ENCODE measurements at regions of chr7 and their contacts with region 1.

Region 1: DNA sequence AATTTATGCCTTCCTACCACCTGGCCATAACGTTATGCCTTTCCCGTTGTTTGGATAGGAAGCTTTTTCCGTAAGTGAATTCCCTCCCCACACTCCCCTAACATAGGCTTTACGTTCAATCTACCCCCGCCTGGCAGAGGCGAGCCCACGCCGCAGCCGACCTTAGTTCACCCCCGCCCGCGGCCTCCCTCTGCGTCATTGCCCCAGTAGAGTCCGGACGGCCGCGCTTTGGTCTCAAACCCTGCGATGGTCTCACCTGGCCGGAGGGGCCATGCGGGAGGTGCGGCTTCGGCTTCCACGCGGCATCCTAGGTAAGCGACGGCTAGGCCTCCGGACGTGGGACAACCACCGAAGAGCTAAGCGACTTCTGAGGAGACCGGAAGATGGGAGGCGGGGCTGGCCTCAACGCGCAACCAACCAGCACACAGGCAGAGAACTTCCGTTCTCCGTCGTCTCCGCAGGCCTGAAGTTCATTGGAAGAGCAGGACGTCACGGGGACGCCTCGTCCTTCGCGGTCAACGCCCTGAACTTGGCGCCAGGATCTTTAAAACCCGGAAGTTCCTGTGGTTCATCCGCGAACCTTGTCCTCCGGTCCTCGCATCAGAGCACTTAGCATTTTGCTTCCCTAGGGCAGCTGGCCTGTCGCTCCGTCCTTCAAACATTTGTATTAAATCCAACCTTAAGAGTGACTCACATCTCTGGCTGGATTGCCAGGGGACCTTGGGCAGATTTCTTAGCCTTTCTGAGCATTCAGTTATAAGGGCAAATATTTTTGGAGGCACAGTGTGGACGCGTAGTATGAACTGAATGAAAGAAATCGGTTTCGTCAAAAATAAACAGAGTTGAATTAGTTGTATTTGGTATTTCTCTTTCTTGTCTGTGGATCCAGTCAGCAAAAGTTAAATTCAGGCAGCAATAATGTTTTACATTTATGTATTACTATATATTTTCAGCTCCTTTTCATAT is at the start of gene CHCHD2:
- DNase-seq: peak; percentile 97
- ATAC-seq: peak; percentile 99
- H3K4me3 ChIP-seq: peak within 1 kb of the TSS; percentile 75 to 99 (median 87)
- H3K4me3 Mint-ChIP-seq: peak within 1 kb of the TSS; percentile 99
- H3K27ac ChIP-seq: peak within 1 kb of the TSS; percentile 77 to 89
- H3K27ac Mint-ChIP-seq: peak within 1 kb of the TSS; percentile 98
- H3K4me1 ChIP-seq: peaks cover 17 to 22% of the 10 kb centered on the region in 2 donors
- H3K4me1 Mint-ChIP-seq: peaks cover 36% of the 10 kb centered on the region
- H3K27me3 ChIP-seq: peaks cover 0 to 3% (median 0%) of the 10 kb centered on the region in 4 experiments
- H3K27me3 Mint-ChIP-seq: peaks cover 3% of the 10 kb centered on the region
- CTCF ChIP-seq: no peak
- total RNA-seq, gene CHCHD2: 166 and 168 TPM in 2 replicates

Region 2: DNA sequence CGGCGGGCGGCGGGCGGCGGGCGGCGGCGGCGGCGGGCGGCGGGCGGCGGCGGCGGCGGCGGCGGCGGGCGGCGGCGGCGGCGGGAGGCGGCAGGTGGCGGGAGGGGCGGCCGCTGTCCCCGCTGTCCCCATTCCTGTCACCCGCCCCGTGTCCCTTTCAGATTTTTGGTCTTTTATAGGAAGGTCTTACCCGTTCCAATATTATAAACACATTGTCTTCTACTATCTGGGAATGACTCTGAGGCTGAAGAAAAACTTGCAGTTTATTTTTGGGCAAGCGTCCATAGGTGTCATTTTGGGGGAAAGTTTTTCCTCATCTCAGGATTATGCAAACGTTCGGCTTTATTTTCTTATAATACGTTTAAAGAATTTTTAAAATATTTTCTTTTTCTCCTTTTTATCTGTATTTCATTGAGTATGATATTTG is 218.6 kb before region 1 on chr7:
- CTCF ChIA-PET with region 1: no interaction called
- POLR2A ChIA-PET with region 1: no interaction called
- intact Hi-C with region 1: loop called (anchors 2 kb)
- DNase-seq: peak; percentile 34
- ATAC-seq: no peak
- H3K4me3 ChIP-seq: peak overlapping the region; percentile 36 to 70 (median 59)
- H3K4me3 Mint-ChIP-seq: peak overlapping the region; percentile 90
- H3K27ac ChIP-seq: no peak overlapping the region
- H3K27ac Mint-ChIP-seq: peak overlapping the region; percentile 86
- H3K4me1 ChIP-seq: peaks cover 0 to 11% of the 10 kb centered on the region in 2 donors
- H3K4me1 Mint-ChIP-seq: peaks cover 8% of the 10 kb centered on the region
- H3K27me3 ChIP-seq: no peaks in the 10 kb centered on the region
- H3K27me3 Mint-ChIP-seq: peaks cover 4% of the 10 kb centered on the region
- CTCF ChIP-seq: no peak

Measured in B cell (primary cell).